H1 (cell line): ENCODE measurements at regions of chr13 and their contacts with region 1.

Region 1: DNA sequence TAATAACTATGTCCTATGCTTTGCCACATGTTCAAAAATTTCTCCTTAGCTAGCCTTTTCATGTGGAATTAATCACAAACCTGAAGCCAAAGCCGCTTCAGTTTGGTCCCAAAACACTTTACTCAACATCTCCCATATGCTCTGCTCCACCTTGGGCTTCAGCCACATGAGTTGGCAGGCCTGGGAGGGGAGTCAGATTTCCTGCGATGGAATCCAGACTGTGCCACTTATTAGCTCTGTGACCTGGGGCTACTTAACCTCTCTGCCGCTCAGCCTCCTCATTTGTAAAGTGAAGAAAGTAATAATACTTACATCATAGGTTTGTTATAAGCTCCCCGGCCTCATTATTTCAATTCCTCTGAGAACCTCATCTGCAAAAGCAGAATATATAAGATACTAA is 272.0 kb downstream of the LMO7 start:
- DNase-seq: no peak
- H3K4me3 ChIP-seq: no peak overlapping the region
- H3K27ac ChIP-seq: no peak overlapping the region
- H3K4me1 ChIP-seq: no peaks in the 10 kb centered on the region
- H3K27me3 ChIP-seq: no peaks in the 10 kb centered on the region
- CTCF ChIP-seq: no peak
- EP300 ChIP-seq: no peak
- POLR2A ChIP-seq: no peak
- RAD21 ChIP-seq: no peak

Region 2: GRCh38 chr13:75830842-75831241 is 77.3 kb before region 1 on chr13:
- CTCF ChIA-PET with region 1: no interaction called
- POLR2A ChIA-PET with region 1: no interaction called
- DNase-seq: no peak
- H3K4me3 ChIP-seq: no peak overlapping the region
- H3K27ac ChIP-seq: no peak overlapping the region
- H3K4me1 ChIP-seq: peaks cover 0 to 3% (median 0%) of the 10 kb centered on the region in 4 experiments; a peak in 2 of 7 replicates
- H3K27me3 ChIP-seq: no peaks in the 10 kb centered on the region
- CTCF ChIP-seq: no peak
- EP300 ChIP-seq: no peak
- POLR2A ChIP-seq: no peak
- RAD21 ChIP-seq: no peak

Region 3: DNA sequence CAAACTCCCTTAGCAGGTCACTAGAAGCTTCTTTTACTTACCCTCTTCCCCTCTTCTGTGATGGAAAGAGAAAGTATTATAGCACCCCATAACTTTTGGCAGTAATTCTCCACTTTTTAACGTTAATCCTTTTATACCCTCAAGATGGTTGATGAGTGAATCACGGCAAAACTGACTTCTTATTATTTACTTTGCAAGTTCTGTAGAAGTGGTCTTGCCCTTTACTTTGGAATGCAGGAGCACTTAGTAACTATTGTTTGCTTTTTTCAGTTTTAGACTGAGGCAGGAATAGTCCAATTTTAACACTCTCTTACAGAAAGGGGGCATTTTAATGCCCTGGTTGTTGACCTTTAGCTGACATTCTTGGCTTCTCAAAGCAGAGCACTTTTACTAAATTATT is 11.9 kb before region 1 on chr13:
- CTCF ChIA-PET with region 1: interaction called, 10 read pairs
- POLR2A ChIA-PET with region 1: no interaction called
- DNase-seq: no peak
- H3K4me3 ChIP-seq: no peak overlapping the region
- H3K27ac ChIP-seq: no peak overlapping the region
- H3K4me1 ChIP-seq: peaks cover 0 to 4% (median 3%) of the 10 kb centered on the region in 4 experiments; a peak in 3 of 7 replicates
- H3K27me3 ChIP-seq: no peaks in the 10 kb centered on the region
- CTCF ChIP-seq: no peak
- EP300 ChIP-seq: no peak
- POLR2A ChIP-seq: no peak
- RAD21 ChIP-seq: no peak

Region 4: GRCh38 chr13:76009491-76009890 is 101.3 kb after region 1 on chr13:
- CTCF ChIA-PET with region 1: no interaction called
- POLR2A ChIA-PET with region 1: no interaction called
- DNase-seq: no peak
- H3K4me3 ChIP-seq: no peak overlapping the region
- H3K27ac ChIP-seq: no peak overlapping the region
- H3K4me1 ChIP-seq: no peaks in the 10 kb centered on the region
- H3K27me3 ChIP-seq: no peaks in the 10 kb centered on the region
- CTCF ChIP-seq: no peak
- EP300 ChIP-seq: no peak
- POLR2A ChIP-seq: no peak
- RAD21 ChIP-seq: no peak